Aorta (tissue), 5 donors: ENCODE measurements at regions of chr11 and their contacts with region 1.

Region 1: DNA sequence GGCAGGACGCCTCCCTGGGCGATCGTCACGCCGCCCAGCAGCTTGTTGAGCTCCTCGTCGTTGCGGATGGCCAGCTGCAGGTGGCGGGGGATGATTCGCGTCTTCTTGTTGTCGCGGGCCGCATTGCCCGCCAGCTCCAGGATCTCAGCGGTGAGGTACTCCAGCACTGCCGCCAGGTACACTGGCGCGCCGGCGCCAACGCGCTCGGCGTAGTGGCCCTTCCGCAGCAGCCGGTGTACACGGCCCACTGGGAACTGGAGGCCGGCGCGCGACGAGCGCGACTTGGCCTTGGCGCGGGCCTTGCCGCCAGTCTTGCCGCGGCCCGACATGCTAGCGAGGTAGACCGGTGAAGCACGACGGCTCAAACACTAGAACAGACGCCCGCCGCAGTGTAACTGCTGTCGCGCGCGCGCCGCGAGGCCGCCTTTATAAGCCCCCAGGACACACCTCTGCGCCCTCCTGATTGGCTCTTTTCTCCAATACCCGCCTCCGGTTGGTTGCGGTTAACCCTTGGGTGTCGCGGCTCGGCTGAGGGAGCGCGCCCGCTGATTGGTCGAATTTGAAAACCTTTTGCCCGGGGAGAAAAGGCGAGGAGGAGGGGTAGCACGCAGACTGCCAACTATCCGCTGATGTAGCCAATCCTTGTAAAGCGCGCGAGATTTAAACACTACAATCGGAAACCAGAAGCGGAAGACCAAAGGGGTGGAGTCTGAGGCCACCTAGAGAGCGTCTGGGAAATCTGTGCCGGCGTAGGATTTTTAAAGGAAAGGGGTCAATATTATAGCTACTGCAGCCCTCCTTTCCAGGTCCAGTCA is 6.4 kb downstream of the DPAGT1 start:
- DNase-seq: peak; percentile 98 to 99
- ATAC-seq: peak; percentile 98
- H3K4me3 ChIP-seq: peak overlapping the region; percentile 27 to 56
- H3K27ac ChIP-seq: peak overlapping the region in 1 of 2 donors; percentile 78
- H3K4me1 ChIP-seq: no peaks in the 10 kb centered on the region
- H3K27me3 ChIP-seq: no peaks in the 10 kb centered on the region

Region 2: GRCh38 chr11:119057000-119057769 is 38.1 kb before region 1 on chr11 and contains the start of gene HYOU1:
- intact Hi-C with region 1: loop called in 1 of 2 experiments (anchors 1 kb)
- DNase-seq: peak; percentile 99 to 100
- ATAC-seq: peak; percentile 97
- H3K4me3 ChIP-seq: peak within 1 kb of the TSS; percentile 49 to 81
- H3K27ac ChIP-seq: peak within 1 kb of the TSS in 1 of 2 donors; percentile 78
- H3K4me1 ChIP-seq: peaks cover 0 to 5% of the 10 kb centered on the region in 2 donors
- H3K27me3 ChIP-seq: no peaks in the 10 kb centered on the region
- total RNA-seq, gene HYOU1: 101 to 145 TPM

Region 3: DNA sequence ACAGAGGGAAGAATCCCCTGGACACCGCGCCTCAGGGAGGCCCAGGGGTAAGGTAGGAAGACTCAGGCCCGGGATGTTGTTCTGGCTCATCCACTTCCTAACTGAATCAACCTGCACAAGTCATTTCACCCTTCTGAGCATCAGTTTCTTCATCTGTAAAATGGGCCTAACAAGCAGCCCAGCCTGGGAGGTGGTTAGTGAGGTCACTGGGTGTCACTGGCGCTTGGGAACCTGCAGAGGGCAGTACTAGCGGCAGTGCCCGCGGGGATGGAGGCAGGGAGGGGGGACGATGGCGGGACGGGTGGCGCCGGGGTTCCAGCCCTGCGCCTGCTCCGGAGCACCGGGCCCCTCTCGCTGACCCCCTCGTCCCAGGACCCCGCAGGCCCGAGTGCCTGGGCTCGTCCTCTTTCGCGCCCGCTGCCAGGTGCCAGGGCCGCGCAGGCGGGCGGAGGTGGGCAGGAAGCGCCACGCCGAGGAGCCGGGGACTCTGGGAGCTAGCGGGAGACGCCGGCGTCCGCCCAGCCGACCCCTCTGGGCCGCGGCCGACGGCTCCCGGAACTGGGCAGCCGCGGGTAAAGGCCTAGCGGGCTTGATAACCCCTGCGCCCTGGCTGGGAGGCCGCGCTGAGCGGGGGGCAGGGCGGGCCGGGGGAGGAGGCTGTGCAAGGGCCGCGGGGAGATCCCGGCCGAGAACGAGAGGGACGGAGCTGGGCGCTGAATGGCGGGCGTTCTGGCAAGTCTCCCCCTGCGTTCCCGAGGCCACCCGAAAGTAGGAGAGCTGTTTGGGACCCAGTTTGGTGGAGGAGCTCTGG is 73.4 kb after region 1 on chr11 and contains the start of gene NLRX1:
- intact Hi-C with region 1: loop called in 1 of 2 experiments (anchors 5 kb)
- DNase-seq: peak; percentile 92 to 94
- ATAC-seq: peak; percentile 96
- H3K4me3 ChIP-seq: peak within 1 kb of the TSS; percentile 21 to 57
- H3K27ac ChIP-seq: peak within 1 kb of the TSS; percentile 84 to 89
- H3K4me1 ChIP-seq: no peaks in the 10 kb centered on the region
- H3K27me3 ChIP-seq: no peaks in the 10 kb centered on the region
- total RNA-seq, gene NLRX1: 12.1 to 17.3 TPM

Region 4: DNA sequence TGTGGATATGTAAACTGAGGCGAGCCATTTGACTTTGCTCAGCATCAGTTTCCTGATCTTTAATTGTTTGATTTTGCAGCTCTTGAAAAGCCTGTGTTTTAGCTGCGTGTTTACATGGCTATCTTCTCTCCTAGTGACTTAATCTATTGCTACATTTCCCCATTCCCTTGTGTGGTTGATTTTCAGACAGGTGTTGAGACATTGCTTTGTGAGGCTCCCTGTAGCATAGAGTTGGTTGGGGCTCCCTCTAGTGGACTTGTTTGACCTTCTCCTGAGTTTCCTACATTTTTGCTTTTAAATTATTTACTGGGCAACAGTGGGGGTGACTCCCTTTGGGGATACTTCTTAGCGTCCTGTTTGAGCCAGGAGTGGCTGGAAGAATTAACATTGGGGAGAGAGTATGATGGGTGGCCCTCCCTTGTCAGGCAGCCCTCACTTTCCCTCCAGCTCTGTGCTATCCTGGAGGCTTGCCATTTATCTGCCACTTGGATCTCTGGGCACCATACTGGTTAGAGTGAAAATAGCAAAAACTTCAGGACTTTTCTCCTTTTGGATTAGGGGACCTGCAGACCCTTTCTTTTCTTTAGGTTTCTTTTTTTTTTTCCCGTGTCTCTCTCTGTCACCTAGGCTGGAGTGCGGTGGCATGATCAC is 101.7 kb after region 1 on chr11:
- intact Hi-C with region 1: loop called in 1 of 2 experiments (anchors 5 kb)
- DNase-seq: no peak
- ATAC-seq: peak; percentile 85
- H3K4me3 ChIP-seq: no peak overlapping the region
- H3K27ac ChIP-seq: no peak overlapping the region
- H3K4me1 ChIP-seq: no peaks in the 10 kb centered on the region
- H3K27me3 ChIP-seq: no peaks in the 10 kb centered on the region